ENCODE measurements at regions of chr6 and their contacts with region 1.

Region 1: GRCh38 chr6:32244946-32245398 is 21.1 kb upstream of the NOTCH4 start:
- DNase-seq: peak; percentile 38 to 83 (median 75)
- ATAC-seq: peak; percentile 69
- H3K4me3 ChIP-seq: peak overlapping the region in 1 of 2 experiments; percentile 18
- H3K4me3 Mint-ChIP-seq: peak overlapping the region; percentile 44
- H3K27ac ChIP-seq: no peak overlapping the region
- H3K27ac Mint-ChIP-seq: no peak overlapping the region
- H3K4me1 ChIP-seq: peaks cover 5% of the 10 kb centered on the region
- H3K4me1 Mint-ChIP-seq: peaks cover 5% of the 10 kb centered on the region
- H3K27me3 ChIP-seq: no peaks in the 10 kb centered on the region
- H3K27me3 Mint-ChIP-seq: peaks cover 2% of the 10 kb centered on the region
- CTCF ChIP-seq: peak; percentile 94

Region 2: DNA sequence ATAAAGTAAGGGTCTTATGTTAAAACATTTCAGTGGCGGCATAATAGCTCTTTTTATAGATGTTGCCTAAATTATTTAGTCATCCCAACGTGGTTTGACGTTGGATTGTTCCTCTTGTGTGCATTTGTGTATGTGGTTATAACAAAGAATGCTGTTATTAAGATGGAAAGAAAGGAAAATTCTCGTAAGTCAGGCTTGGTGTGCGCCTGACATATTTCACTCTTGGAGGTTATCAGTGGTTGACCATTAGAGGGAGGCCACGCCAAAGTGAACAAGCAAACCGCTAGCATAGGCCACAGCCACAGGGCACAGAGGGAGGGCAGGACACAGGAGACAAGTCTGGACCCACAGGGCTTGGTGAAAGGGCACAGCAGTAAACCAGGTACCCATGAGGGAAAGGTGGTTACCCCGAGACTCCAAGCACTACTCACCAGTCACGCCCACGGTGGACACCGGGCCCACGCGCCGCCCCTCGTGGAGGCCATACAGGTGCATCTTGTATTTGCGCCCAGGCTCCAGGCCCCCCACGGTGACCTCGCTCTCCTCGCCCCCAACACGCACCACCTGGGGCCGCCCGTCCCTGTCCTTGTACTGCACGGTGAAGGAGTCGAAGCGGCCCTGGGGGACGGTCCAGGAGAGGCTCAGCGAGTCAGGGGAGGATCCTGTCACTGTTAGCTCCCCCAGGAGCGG is 183.9 kb before region 1 on chr6:
- CTCF ChIA-PET with region 1: no interaction called
- POLR2A ChIA-PET with region 1: no interaction called
- intact Hi-C with region 1: no loop called
- DNase-seq: no peak
- ATAC-seq: no peak
- H3K4me3 ChIP-seq: no peak overlapping the region
- H3K4me3 Mint-ChIP-seq: no peak overlapping the region
- H3K27ac ChIP-seq: no peak overlapping the region
- H3K27ac Mint-ChIP-seq: no peak overlapping the region
- H3K4me1 ChIP-seq: no peaks in the 10 kb centered on the region
- H3K4me1 Mint-ChIP-seq: no peaks in the 10 kb centered on the region
- H3K27me3 ChIP-seq: no peaks in the 10 kb centered on the region
- H3K27me3 Mint-ChIP-seq: no peaks in the 10 kb centered on the region
- CTCF ChIP-seq: no peak

Region 3: DNA sequence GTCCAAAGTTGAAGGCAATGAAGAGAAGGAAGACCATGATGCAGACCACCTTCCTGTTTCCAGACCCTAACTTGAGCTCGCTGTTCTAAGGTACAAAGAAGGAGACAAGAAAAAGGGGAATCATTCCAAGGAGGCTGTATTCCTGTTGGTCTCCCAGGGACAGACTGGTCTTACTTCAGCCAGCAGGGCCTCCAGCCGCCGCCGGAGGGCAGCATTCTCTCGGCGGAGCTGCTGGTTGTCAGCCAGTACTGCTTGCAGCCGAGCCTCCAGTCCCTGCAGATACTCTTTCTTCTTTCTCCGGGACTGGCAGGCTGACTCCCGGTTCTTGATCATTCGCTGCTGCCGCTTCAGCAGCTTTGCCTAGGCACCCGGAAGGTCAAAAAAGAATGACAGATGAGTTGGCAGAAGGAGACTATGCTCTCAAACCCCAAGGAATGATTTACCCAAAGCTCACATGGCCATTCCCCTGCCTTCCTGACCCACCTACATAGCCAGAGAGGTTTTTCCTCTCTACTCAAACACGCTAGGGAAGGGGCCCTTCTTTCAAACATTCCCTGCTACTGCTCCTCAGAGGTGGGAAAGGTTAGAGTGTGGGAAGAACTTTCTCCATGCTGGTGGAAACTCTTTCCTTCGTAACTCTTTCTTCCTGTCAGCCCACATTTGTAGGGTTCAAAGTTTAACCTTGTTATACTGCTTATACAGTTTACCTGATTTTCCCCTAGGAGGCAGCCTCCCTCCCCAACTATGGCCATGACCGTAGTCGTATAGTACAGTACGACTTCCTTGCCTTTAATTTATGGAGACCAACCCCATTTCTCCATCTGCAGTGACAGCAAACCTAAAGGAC is 126.0 kb before region 1 on chr6:
- CTCF ChIA-PET with region 1: interaction called, 18 read pairs
- POLR2A ChIA-PET with region 1: no interaction called
- intact Hi-C with region 1: loop called in 1 of 2 experiments (anchors 2 kb)
- DNase-seq: peak; percentile 46 to 80 (median 70)
- ATAC-seq: peak; percentile 86
- H3K4me3 ChIP-seq: no peak overlapping the region
- H3K4me3 Mint-ChIP-seq: no peak overlapping the region
- H3K27ac ChIP-seq: no peak overlapping the region
- H3K27ac Mint-ChIP-seq: peak overlapping the region; percentile 62
- H3K4me1 ChIP-seq: no peaks in the 10 kb centered on the region
- H3K4me1 Mint-ChIP-seq: peaks cover 8% of the 10 kb centered on the region
- H3K27me3 ChIP-seq: no peaks in the 10 kb centered on the region
- H3K27me3 Mint-ChIP-seq: no peaks in the 10 kb centered on the region
- CTCF ChIP-seq: peak; percentile 79

Region 4: DNA sequence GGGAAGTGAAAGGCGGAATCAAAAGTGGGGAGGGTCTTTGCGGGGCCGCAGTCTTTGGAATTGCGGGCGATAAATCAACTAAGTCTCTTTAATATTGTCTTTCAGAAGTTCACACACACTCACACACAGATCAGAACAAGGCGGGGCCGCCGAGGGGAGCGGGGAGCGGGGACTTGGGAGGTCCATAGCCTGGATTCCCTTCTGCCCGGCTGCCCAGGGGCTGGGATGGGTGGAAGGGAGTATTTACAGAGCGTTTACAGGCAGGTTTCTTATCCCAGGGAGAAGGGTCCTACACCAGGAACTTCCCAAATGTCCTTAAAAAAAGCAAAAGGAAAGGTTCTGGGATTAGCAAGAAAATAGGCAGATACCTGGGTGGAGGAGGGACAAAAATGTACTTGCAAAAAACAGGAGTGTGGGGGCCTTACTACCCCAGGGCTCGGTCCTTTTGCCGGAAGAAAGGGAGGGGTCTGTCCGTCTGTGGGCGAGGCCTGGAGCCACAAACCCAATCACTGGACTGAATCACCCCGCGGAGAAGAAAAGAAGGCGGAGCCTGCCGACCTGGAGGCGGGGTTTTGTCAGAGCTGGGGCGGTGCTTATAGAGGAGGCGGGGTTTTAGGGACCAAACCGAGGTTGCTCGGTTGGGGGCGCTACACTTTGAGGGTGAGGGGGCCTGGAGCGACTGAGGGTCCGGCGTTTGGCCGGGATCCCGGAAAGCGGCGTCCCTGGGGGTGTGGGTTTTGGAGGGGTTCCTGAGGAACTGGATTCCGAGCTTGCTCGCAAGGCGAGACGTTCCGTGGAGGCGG is 96.5 kb before region 1 on chr6:
- CTCF ChIA-PET with region 1: interaction called, 3 read pairs
- POLR2A ChIA-PET with region 1: no interaction called
- intact Hi-C with region 1: loop called in 1 of 2 experiments (anchors 10 kb)
- DNase-seq: peak; percentile 38 to 80 (median 69)
- ATAC-seq: peak; percentile 83
- H3K4me3 ChIP-seq: peak overlapping the region in 1 of 2 experiments; percentile 45
- H3K4me3 Mint-ChIP-seq: peak overlapping the region; percentile 84
- H3K27ac ChIP-seq: no peak overlapping the region
- H3K27ac Mint-ChIP-seq: peak overlapping the region; percentile 43
- H3K4me1 ChIP-seq: peaks cover 31% of the 10 kb centered on the region
- H3K4me1 Mint-ChIP-seq: peaks cover 47% of the 10 kb centered on the region
- H3K27me3 ChIP-seq: peaks cover 0 to 9% of the 10 kb centered on the region in 2 experiments
- H3K27me3 Mint-ChIP-seq: peaks cover 19% of the 10 kb centered on the region
- CTCF ChIP-seq: peak; percentile 35

Region 5: DNA sequence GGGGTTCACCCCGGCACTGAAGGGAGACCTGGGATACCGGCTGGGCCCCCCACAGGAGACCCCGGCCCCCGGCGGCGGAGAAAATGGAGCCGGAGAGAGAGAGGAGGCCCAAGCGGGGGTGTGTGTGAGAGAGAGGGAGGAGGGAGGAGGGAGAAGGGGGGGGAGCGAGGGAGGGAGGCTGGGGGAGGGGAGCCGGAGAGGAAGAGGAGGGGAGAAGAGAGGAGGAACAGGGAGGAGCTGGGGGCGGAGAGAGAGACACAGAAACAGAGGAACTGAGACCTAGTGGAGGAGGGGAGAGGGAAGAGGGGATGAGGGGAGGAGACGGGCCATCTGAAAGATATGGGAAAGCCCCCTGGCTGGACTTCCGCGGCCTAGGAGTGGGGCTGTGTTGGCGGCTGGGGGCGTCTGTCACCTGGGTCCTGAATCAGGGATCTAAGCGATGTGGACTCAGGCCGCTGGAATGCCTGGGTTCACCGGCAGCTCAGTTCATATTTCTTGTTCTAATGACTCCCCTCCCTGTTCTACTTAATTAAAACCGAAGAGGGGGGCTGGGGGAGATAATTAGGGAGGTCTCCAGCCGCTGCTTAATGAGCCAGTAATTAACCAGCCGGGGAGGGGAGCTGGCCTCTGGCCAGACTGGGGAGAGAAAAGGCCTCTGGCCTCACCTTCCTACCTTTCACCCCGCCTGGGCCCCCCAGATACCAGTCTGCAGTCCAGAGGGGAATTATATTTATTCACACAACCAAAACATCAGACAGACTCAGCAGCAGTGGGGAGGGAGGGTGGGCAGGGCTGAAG is 54.7 kb before region 1 on chr6 and contains the start of gene PBX2:
- CTCF ChIA-PET with region 1: interaction called, 6 read pairs
- POLR2A ChIA-PET with region 1: interaction called, 3 read pairs
- intact Hi-C with region 1: loop called in 1 of 2 experiments (anchors 2 kb)
- DNase-seq: peak; percentile 52 to 93 (median 86)
- ATAC-seq: peak; percentile 52
- H3K4me3 ChIP-seq: peak within 1 kb of the TSS; percentile 78 to 82
- H3K4me3 Mint-ChIP-seq: peak within 1 kb of the TSS; percentile 99
- H3K27ac ChIP-seq: peak within 1 kb of the TSS; percentile 73 to 97
- H3K27ac Mint-ChIP-seq: peak within 1 kb of the TSS; percentile 97
- H3K4me1 ChIP-seq: peaks cover 59% of the 10 kb centered on the region
- H3K4me1 Mint-ChIP-seq: peaks cover 64% of the 10 kb centered on the region
- H3K27me3 ChIP-seq: no peaks in the 10 kb centered on the region
- H3K27me3 Mint-ChIP-seq: no peaks in the 10 kb centered on the region
- CTCF ChIP-seq: no peak
- total RNA-seq, gene PBX2: 53.3 to 54.4 TPM

Region 6: DNA sequence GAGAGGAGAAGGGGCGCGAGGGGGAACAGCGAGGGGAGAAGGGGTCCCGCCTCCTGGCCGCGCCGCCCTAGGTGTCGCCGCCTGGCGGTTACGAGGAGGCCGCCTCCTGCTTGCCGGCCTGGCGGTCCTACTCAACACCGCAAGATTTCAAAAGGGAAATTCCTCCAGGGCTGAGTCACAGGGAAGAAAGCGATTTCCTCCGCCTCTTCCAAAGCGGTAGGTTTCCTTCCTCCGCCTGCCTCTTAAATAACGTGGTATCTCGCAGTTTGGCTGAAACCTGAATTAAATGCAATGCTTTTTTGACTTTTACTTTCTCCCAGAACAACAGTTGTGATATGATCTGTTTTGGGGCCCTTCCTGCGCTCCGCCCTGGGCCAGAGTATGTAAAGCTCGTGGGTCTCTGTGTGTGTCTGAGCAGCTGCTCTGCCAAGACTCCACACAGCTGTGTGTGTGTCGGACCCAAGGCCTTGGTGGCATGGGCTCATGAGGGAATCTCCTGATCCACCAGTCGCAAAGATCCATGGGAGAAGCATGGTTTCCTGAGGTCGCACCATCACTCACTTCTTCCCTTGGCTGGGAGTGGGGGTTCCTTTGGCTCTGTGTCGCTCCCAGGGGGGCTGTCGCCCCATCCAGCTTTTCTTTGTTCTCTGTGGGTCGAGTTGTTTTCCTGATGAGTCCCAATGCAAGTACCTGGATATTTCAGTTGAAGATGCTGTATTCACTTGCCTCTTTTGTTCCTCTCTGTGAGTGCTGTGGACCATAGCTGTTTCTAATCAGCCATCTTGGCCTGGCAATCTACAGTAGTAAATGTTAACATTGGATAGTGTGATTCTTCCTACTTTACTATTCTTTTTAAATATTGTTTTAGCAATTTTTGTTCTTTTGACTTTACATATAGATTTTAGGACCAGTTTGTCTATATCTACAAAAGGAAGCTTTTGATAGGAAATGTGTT is 10.5 kb after region 1 on chr6:
- CTCF ChIA-PET with region 1: interaction called, 15 read pairs
- POLR2A ChIA-PET with region 1: no interaction called
- intact Hi-C with region 1: no loop called
- DNase-seq: peak in 8 of 9 experiments; percentile 29 to 80 (median 54)
- ATAC-seq: peak; percentile 79
- H3K4me3 ChIP-seq: peak overlapping the region in 1 of 2 experiments; percentile 3
- H3K4me3 Mint-ChIP-seq: peak overlapping the region; percentile 43
- H3K27ac ChIP-seq: no peak overlapping the region
- H3K27ac Mint-ChIP-seq: no peak overlapping the region
- H3K4me1 ChIP-seq: peaks cover 10% of the 10 kb centered on the region
- H3K4me1 Mint-ChIP-seq: peaks cover 18% of the 10 kb centered on the region
- H3K27me3 ChIP-seq: peaks cover 0 to 2% of the 10 kb centered on the region in 2 experiments
- H3K27me3 Mint-ChIP-seq: peaks cover 2% of the 10 kb centered on the region
- CTCF ChIP-seq: peak; percentile 32

Region 7: DNA sequence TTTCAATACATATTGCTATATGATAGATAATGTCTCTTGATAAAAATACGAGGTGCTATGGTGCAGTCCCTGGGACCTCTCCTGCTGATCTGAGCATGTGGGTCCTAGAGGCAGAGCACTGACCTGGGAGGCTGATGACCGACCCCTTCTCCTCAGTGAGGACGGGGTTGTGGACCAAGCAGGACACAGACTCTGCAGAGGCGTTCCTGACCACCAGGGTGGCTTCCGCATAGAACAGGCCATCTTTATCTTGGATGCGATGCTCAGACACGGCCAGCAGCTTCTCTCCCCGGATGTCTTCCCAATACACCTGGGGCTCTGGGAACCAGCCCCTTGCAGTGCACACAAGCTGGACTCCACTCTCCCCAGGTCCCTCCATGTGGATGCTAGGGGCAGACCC is 157.8 kb after region 1 on chr6:
- CTCF ChIA-PET with region 1: no interaction called
- POLR2A ChIA-PET with region 1: no interaction called
- intact Hi-C with region 1: no loop called
- DNase-seq: no peak
- ATAC-seq: no peak
- H3K4me3 ChIP-seq: no peak overlapping the region
- H3K4me3 Mint-ChIP-seq: no peak overlapping the region
- H3K27ac ChIP-seq: no peak overlapping the region
- H3K27ac Mint-ChIP-seq: no peak overlapping the region
- H3K4me1 ChIP-seq: no peaks in the 10 kb centered on the region
- H3K4me1 Mint-ChIP-seq: no peaks in the 10 kb centered on the region
- H3K27me3 ChIP-seq: no peaks in the 10 kb centered on the region
- H3K27me3 Mint-ChIP-seq: peaks cover 40% of the 10 kb centered on the region
- CTCF ChIP-seq: no peak

Region 8: GRCh38 chr6:32700391-32701040 is 455.5 kb after region 1 on chr6:
- CTCF ChIA-PET with region 1: interaction called, 5 read pairs
- POLR2A ChIA-PET with region 1: no interaction called
- intact Hi-C with region 1: loop called in 1 of 2 experiments (anchors 5 kb)
- DNase-seq: peak in 6 of 9 experiments; percentile 2 to 71 (median 46)
- ATAC-seq: peak; percentile 49
- H3K4me3 ChIP-seq: no peak overlapping the region
- H3K4me3 Mint-ChIP-seq: no peak overlapping the region
- H3K27ac ChIP-seq: no peak overlapping the region
- H3K27ac Mint-ChIP-seq: no peak overlapping the region
- H3K4me1 ChIP-seq: no peaks in the 10 kb centered on the region
- H3K4me1 Mint-ChIP-seq: peaks cover 4% of the 10 kb centered on the region
- H3K27me3 ChIP-seq: no peaks in the 10 kb centered on the region
- H3K27me3 Mint-ChIP-seq: peaks cover 40% of the 10 kb centered on the region
- CTCF ChIP-seq: peak; percentile 86